Activated T-helper 2 cell treated with anti-CD3 and anti-CD28 coated beads, Interferon-gamma antibody, Interleukin-2, Interleukin-4, amounts not matched to agents 10 μg/mL and 5 μg/mL and 100 μg/mL, durations not matched to agents 14 hours and 24 hours and 36 hours (primary cell): ENCODE measurements at regions of chr11 and their contacts with region 1.

Region 1: DNA sequence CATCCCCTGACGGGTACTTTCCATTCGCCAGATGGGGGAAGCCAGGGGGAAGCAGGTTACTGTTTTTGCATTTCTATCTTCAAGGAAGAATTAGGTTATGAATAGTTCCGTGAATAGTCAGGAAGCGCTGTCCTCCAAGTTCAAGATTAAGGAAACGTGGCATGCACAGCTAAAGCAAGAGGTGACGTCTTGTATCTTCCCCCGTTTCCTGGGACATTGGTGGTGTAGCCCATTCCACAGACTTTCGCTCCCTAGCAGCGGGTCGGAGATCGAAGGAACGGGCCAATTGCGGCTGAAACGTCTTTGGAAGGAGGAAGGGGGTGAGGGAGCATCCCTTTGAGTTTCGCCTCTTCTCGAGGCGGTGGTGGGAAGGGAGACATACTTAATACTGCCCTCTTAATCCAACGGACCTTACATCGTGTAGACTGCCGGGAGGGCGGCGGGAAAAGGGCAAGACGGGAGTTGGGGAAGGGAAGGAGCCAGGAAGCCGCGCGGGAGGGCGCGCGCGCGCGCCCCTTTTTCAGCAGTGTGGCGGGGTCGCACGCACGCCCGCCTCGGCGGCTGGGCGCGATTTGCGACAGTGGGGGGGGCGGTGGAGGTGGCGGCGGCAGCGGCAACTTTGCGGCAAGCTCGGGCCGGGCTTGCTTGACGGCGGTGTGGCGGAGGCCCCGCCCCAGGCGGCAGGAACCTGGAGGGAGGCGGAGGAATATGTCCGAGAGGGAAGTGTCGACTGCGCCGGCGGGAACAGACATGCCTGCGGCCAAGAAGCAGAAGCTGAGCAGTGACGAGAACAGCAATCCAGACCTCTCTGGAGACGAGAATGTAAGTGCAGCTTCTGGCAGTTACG is at the start of gene EED:
- DNase-seq: peak; percentile 92
- H3K4me3 Mint-ChIP-seq: no peak within 1 kb of the TSS
- H3K27ac Mint-ChIP-seq: no peak within 1 kb of the TSS
- H3K4me1 Mint-ChIP-seq: peaks cover 38% of the 10 kb centered on the region
- H3K27me3 Mint-ChIP-seq: no peaks in the 10 kb centered on the region
- total RNA-seq, gene EED: 174 and 182 TPM in 2 replicates

Region 2: GRCh38 chr11:85854557-85855340 is 390.0 kb before region 1 on chr11:
- intact Hi-C with region 1: loop called (anchors 10 kb)
- DNase-seq: peak; percentile 87
- H3K4me3 Mint-ChIP-seq: peak overlapping the region; percentile 84
- H3K27ac Mint-ChIP-seq: peak overlapping the region; percentile 90
- H3K4me1 Mint-ChIP-seq: peaks cover 13% of the 10 kb centered on the region
- H3K27me3 Mint-ChIP-seq: peaks cover 3% of the 10 kb centered on the region

Region 3: DNA sequence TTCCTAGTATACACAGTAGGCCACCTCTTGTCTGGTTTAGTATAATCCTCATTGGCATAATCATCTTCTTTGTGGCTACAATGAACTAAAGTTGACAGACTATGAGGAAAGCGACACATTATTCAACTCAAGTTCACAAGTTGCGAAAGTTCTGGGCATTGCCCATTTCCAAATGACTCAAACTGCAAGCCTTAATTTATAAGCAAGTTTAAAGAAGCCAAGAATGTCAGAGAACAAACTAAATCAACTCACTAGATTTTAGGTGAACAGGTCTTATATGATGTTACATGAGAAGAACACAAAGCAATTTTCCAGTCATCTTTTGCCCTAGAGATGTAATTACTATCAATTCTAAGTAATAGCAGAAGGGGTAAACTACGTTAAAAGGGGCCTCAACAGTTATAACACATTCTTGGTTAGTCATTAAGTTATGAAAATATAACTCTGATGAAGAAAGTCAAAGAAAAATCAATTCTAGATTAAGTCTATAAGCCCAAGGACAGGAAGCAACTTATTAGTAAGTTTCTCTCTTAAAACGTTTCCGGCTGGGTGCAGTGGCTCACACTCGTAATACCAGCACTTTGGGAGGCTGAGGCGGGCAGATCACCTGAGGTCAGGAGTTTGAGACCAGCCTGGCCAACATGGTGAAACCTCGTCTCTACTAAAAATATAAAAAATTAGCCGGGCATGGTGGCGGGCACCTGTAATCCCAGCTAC is 197.3 kb before region 1 on chr11:
- intact Hi-C with region 1: loop called (anchors 2 kb)
- DNase-seq: no peak
- H3K4me3 Mint-ChIP-seq: peak overlapping the region; percentile 65
- H3K27ac Mint-ChIP-seq: peak overlapping the region; percentile 96
- H3K4me1 Mint-ChIP-seq: peaks cover 73% of the 10 kb centered on the region
- H3K27me3 Mint-ChIP-seq: no peaks in the 10 kb centered on the region

Region 4: GRCh38 chr11:86116386-86116726 is 128.4 kb before region 1 on chr11:
- intact Hi-C with region 1: loop called (anchors 1 kb)
- DNase-seq: no peak
- H3K4me3 Mint-ChIP-seq: peak overlapping the region; percentile 22
- H3K27ac Mint-ChIP-seq: peak overlapping the region; percentile 83
- H3K4me1 Mint-ChIP-seq: peaks cover 42% of the 10 kb centered on the region
- H3K27me3 Mint-ChIP-seq: no peaks in the 10 kb centered on the region

Region 5: GRCh38 chr11:86218125-86219084 is 26.3 kb before region 1 on chr11:
- intact Hi-C with region 1: loop called (anchors 1 kb)
- DNase-seq: peak; percentile 49
- H3K4me3 Mint-ChIP-seq: peak overlapping the region; percentile 13
- H3K27ac Mint-ChIP-seq: peak overlapping the region; percentile 70
- H3K4me1 Mint-ChIP-seq: peaks cover 67% of the 10 kb centered on the region
- H3K27me3 Mint-ChIP-seq: no peaks in the 10 kb centered on the region

Region 6: GRCh38 chr11:86302100-86302793 is 57.5 kb after region 1 on chr11 and contains the start of gene HIKESHI:
- intact Hi-C with region 1: loop called (anchors 1 kb)
- DNase-seq: peak; percentile 81
- H3K4me3 Mint-ChIP-seq: peak within 1 kb of the TSS; percentile 99
- H3K27ac Mint-ChIP-seq: peak within 1 kb of the TSS; percentile 96
- H3K4me1 Mint-ChIP-seq: peaks cover 25% of the 10 kb centered on the region
- H3K27me3 Mint-ChIP-seq: peaks cover 3% of the 10 kb centered on the region
- total RNA-seq, gene HIKESHI: 49.1 and 56.0 TPM in 2 replicates